PC-3 (cell line): ENCODE measurements at regions of chr3 and their contacts with region 1.

Region 1: DNA sequence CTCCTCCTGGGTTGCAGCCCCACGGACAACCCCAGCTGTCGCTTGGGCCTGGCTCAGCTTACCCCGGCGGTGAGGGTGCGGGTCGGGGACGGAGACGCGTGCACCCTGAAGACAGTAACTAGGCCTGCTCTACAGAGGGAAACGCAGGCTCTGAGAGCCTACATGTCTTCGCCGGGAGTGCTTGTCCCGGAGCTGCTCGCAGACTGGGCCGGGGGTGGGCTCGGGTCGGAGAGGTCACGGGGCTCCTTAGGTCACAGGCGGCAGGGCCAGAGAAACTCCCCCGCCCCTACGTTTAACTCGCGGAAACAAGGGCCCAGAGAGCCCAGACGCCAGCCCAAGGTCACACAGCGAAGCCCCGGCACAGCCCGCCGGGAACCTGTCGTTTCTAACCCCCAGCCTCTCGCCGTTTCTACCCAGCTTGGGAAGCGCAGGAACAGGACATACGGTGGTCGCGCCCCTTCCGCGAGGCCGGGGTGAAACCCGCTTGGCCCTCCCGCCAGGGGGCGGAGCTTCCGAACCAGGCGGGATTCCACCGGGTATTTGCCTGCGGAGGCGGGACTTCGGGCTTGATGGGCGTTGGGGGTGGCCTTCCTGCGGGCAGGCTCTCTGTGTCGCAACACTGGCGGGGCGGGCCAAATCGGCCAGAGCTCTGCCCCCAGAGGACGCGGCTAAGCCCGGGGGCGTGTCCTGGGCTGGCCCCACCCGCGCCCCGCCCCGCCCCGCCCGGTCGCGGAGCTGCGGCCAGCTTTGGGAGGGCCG is at the start of gene HDAC11:
- DNase-seq: peak; percentile 98
- ATAC-seq: peak; percentile 94
- H3K4me3 ChIP-seq: peak within 1 kb of the TSS; percentile 88
- H3K27ac ChIP-seq: 0 out of 2 replicates have a peak within 1 kb of the TSS, but pooled peaks have one; percentile 24
- H3K4me1 ChIP-seq: peaks cover 26% of the 10 kb centered on the region
- H3K27me3 ChIP-seq: no peaks in the 10 kb centered on the region
- CTCF ChIP-seq: no peak
- total RNA-seq, gene HDAC11: 21.8 and 24.2 TPM in 2 replicates

Region 2: GRCh38 chr3:13110678-13111116 is 369.1 kb before region 1 on chr3:
- CTCF ChIA-PET with region 1: no interaction called
- POLR2A ChIA-PET with region 1: no interaction called
- intact Hi-C with region 1: no loop called
- DNase-seq: peak; percentile 95
- ATAC-seq: peak; percentile 44
- H3K4me3 ChIP-seq: peak overlapping the region; percentile 51
- H3K27ac ChIP-seq: peak overlapping the region; percentile 99
- H3K4me1 ChIP-seq: peaks cover 80% of the 10 kb centered on the region
- H3K27me3 ChIP-seq: no peaks in the 10 kb centered on the region
- CTCF ChIP-seq: no peak

Region 3: GRCh38 chr3:13419505-13420044 is 60.2 kb before region 1 on chr3:
- CTCF ChIA-PET with region 1: interaction called, 11 read pairs
- POLR2A ChIA-PET with region 1: interaction called, 11 read pairs
- intact Hi-C with region 1: no loop called
- DNase-seq: peak; percentile 37
- ATAC-seq: peak; percentile 71
- H3K4me3 ChIP-seq: peak overlapping the region; percentile 73
- H3K27ac ChIP-seq: peak overlapping the region; percentile 2; the same call in 1 of the 2 replicates
- H3K4me1 ChIP-seq: peaks cover 41% of the 10 kb centered on the region
- H3K27me3 ChIP-seq: no peaks in the 10 kb centered on the region
- CTCF ChIP-seq: peak; percentile 18; the same call in 1 of the 2 replicates

Region 4: DNA sequence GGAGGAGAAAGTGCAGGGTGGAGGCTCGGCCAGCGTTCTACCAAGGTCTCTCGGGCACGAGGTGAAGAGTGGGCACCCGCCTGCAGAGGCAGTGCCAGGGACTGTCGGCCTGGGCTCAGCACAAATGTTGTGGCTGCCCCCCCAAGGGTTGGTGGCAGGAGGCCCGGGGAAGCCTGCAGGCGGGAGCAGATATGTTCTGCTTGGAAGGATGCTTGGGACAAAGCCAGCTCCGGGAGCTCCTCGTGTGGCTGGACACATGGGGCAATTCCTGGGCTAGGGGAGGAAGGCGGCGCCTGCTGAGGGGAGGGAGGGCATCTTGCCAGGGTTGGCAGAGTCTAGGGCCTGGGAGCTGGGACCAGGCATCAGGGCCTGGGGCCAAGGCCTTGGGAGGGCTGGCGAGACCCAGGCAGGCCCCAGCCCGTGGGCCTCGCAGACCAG is 38.8 kb after region 1 on chr3:
- CTCF ChIA-PET with region 1: no interaction called
- POLR2A ChIA-PET with region 1: no interaction called
- intact Hi-C with region 1: no loop called
- DNase-seq: no peak
- ATAC-seq: no peak
- H3K4me3 ChIP-seq: no peak overlapping the region
- H3K27ac ChIP-seq: no peak overlapping the region
- H3K4me1 ChIP-seq: peaks cover 17% of the 10 kb centered on the region
- H3K27me3 ChIP-seq: no peaks in the 10 kb centered on the region
- CTCF ChIP-seq: no peak

Region 5: GRCh38 chr3:13600941-13601576 is 121.3 kb after region 1 on chr3:
- CTCF ChIA-PET with region 1: no interaction called
- POLR2A ChIA-PET with region 1: interaction called, 17 read pairs
- intact Hi-C with region 1: no loop called
- DNase-seq: peak; percentile 98
- ATAC-seq: peak; percentile 80
- H3K4me3 ChIP-seq: no peak overlapping the region
- H3K27ac ChIP-seq: peak overlapping the region; percentile 86
- H3K4me1 ChIP-seq: peaks cover 39% of the 10 kb centered on the region
- H3K27me3 ChIP-seq: no peaks in the 10 kb centered on the region
- CTCF ChIP-seq: no peak